ENCODE measurements at regions of chr7 and their contacts with region 1.

Region 1: DNA sequence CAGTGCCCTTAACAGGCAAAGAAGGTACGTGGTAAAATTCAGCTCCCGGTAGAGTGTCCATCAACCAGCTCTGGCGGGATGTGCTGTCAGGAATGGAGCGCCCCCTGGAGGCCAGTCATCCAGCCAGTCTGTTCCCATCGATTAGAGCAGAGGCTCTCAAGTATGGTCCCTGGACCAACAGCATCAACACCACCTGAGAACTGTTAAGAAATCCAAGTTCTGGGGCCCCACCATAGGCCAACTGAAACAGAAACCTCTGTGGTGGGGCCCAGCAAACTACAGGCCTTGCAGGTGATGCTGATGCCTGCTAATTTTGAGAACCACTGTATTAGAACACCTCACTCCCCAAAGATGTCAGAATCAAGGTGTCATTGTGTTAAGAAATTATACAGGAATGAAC is 109.2 kb downstream of the DPY19L1 start:
- DNase-seq: peak in 4 of 5 donors; percentile 3 to 26 (median 16)
- H3K4me3 ChIP-seq: no peak overlapping the region
- H3K4me3 Mint-ChIP-seq: no peak overlapping the region
- H3K27ac ChIP-seq: no peak overlapping the region
- H3K27ac Mint-ChIP-seq: no peak overlapping the region
- H3K4me1 ChIP-seq: no peaks in the 10 kb centered on the region
- H3K4me1 Mint-ChIP-seq: no peaks in the 10 kb centered on the region
- H3K27me3 ChIP-seq: no peaks in the 10 kb centered on the region
- H3K27me3 Mint-ChIP-seq: no peaks in the 10 kb centered on the region

Region 2: GRCh38 chr7:34823640-34824258 is 104.3 kb before region 1 on chr7:
- CTCF ChIA-PET with region 1: interaction called, 3 read pairs
- POLR2A ChIA-PET with region 1: no interaction called
- intact Hi-C with region 1: loop called (anchors 5 kb)
- DNase-seq: peak; percentile 22 to 55 (median 36)
- H3K4me3 ChIP-seq: no peak overlapping the region
- H3K4me3 Mint-ChIP-seq: no peak overlapping the region
- H3K27ac ChIP-seq: no peak overlapping the region
- H3K27ac Mint-ChIP-seq: no peak overlapping the region
- H3K4me1 ChIP-seq: no peaks in the 10 kb centered on the region
- H3K4me1 Mint-ChIP-seq: no peaks in the 10 kb centered on the region
- H3K27me3 ChIP-seq: no peaks in the 10 kb centered on the region
- H3K27me3 Mint-ChIP-seq: no peaks in the 10 kb centered on the region